Endothelial cell of umbilical vein (primary cell): ENCODE measurements at regions of chr16 and their contacts with region 1.

Region 1: DNA sequence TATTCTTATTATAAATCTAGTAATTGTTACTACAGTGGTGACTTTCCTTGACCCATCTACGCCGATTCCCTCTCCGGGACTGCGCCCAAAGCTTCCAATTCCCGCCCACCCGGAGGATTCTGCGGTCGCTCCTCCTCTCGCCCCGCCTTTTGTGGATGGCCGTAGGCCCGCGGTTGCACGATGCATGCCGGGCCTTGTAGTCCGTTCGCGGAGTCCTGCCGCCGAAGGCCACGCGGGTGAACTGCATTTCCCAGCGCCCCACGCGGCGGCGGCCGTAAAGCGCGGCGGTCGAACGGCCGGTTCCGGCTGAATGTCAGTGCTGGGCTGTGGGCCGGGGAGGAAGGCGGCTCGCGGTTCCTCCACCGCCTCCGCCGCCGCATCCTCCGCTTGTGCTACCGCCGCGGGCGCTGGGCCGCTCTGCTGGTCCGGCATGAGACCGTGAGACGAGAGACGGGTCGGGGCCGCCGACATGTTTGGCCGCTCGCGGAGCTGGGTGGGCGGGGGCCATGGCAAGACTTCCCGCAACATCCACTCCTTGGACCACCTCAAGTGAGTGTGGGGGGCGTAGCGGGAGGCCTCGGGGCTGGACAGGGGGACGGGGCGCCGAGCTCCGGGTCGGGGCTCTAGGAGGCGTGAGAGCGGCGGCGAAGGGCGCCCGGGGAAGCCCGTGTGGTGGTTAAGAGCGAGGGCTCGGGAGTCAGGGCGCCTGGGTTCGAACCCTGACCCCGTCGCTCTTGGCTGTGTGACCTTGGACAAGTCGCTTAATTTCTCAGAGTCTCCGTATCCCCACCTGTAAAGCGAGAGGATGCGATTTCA is at the start of gene CLEC16A:
- DNase-seq: peak; percentile 98
- H3K4me3 ChIP-seq: peak within 1 kb of the TSS; percentile 65 to 92 (median 80)
- H3K27ac ChIP-seq: peak within 1 kb of the TSS; percentile 57
- H3K4me1 ChIP-seq: peaks cover 36% of the 10 kb centered on the region
- H3K27me3 ChIP-seq: no peaks in the 10 kb centered on the region
- CTCF ChIP-seq: no peak
- POLR2A ChIP-seq: peak; percentile 52
- total RNA-seq, gene CLEC16A: 23.3 and 25.7 TPM in 2 replicates

Region 2: DNA sequence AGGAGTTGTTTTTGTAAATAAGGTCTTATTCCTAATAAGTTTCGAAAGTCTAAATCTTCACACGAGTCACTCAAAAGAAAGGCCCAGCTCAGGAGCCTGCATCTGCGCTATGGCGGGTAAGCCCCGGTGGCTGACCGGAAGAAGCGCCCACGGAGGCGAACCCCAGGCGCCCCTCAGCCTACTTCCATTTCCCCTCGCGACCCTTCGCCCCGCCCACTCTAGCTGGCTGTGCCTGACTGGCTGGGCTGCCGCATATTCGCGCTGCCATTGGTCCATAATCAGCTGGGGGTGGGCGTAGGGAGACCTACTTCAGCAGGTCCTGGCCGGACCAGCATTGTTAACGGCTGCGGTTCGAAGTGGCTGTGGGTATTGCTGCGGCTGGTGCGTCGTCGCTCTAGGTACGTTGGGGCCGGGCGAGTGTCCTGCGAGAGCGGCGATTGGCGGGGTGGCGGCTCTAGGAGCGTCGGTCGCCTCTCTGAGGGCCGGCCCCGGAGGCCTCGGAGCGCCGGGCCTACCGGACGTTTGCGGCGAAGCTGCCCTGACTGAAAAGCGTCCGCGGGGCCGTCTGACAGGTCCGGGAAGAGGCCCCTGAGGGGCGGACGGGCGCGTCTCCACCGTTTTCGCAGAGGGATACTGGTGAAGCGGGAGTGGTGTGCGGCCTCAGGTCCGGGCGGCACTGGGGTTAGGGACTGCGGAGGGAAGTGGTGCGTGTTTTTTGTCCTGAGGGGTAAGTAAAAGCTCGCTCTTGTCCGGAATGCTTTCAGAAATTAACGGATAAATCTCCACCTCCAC is 558.5 kb before region 1 on chr16 and contains the start of gene ATF7IP2:
- CTCF ChIA-PET with region 1: no interaction called
- POLR2A ChIA-PET with region 1: no interaction called
- dilution Hi-C with region 1: no loop called
- intact Hi-C with region 1: loop called (anchors 10 kb)
- DNase-seq: peak; percentile 95
- H3K4me3 ChIP-seq: peak within 1 kb of the TSS; percentile 72 to 94 (median 94)
- H3K27ac ChIP-seq: peak within 1 kb of the TSS; percentile 55
- H3K4me1 ChIP-seq: peaks cover 8% of the 10 kb centered on the region
- H3K27me3 ChIP-seq: no peaks in the 10 kb centered on the region
- CTCF ChIP-seq: no peak
- POLR2A ChIP-seq: peak; percentile 91
- total RNA-seq, gene ATF7IP2: 13.0 and 14.6 TPM in 2 replicates

Region 3: GRCh38 chr16:10579965-10580882 is 364.2 kb before region 1 on chr16 and contains the start of gene EMP2:
- CTCF ChIA-PET with region 1: no interaction called
- POLR2A ChIA-PET with region 1: no interaction called
- dilution Hi-C with region 1: no loop called
- intact Hi-C with region 1: loop called (anchors 1 kb)
- DNase-seq: peak; percentile 72
- H3K4me3 ChIP-seq: peak within 1 kb of the TSS; percentile 64 to 73 (median 64)
- H3K27ac ChIP-seq: peak within 1 kb of the TSS; percentile 30
- H3K4me1 ChIP-seq: peaks cover 3% of the 10 kb centered on the region
- H3K27me3 ChIP-seq: peaks cover 6 to 12% of the 10 kb centered on the region in 2 experiments
- CTCF ChIP-seq: peak; percentile 47 to 80
- POLR2A ChIP-seq: no peak
- total RNA-seq, gene EMP2: 18.3 and 25.5 TPM in 2 replicates

Region 4: GRCh38 chr16:10699756-10700155 is 244.7 kb before region 1 on chr16:
- CTCF ChIA-PET with region 1: no interaction called
- POLR2A ChIA-PET with region 1: no interaction called
- dilution Hi-C with region 1: no loop called
- intact Hi-C with region 1: no loop called
- DNase-seq: no peak
- H3K4me3 ChIP-seq: no peak overlapping the region
- H3K27ac ChIP-seq: no peak overlapping the region
- H3K4me1 ChIP-seq: no peaks in the 10 kb centered on the region
- H3K27me3 ChIP-seq: no peaks in the 10 kb centered on the region
- CTCF ChIP-seq: no peak
- POLR2A ChIP-seq: no peak

Region 5: DNA sequence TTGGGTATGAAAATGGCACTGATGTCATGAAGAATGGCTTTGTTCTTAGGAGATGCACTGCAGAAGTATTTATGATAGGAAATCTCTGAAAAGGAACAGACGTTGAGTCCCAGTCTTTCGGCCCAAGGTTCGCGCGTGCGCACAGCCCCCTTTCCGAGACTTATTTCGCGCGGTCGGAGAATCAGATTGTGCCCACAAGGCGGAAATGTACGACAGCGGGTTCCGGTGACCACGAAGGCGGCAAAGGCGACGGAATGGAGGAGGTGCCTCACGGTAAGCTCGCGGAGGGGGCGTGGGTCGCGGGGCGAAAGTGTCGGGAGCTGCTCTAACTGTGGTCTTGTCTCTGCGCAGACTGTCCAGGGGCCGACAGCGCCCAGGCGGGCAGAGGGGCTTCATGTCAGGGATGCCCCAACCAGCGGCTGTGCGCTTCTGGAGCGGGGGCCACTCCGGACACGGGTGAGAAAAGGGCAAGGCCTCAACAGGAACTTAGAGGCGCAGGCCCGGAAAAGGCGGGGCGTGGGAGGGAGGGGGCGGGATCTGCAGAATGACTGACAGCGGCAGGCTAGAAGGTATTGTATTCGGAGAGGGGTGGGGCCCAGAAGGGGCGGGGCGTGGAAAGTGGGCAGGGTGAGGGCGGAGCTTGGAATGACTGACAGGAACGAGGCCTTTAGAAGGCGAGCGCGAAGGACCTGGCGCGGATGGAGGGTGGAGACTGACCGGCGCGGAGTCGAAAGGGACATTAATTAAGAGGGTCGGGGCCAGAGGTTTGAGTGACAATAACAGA is 200.7 kb before region 1 on chr16 and contains the start of gene NUBP1:
- CTCF ChIA-PET with region 1: interaction called, 4 read pairs
- POLR2A ChIA-PET with region 1: no interaction called
- dilution Hi-C with region 1: no loop called
- intact Hi-C with region 1: loop called (anchors 1 kb)
- DNase-seq: peak; percentile 100
- H3K4me3 ChIP-seq: peak within 1 kb of the TSS; percentile 3 to 72 (median 56)
- H3K27ac ChIP-seq: peak within 1 kb of the TSS; percentile 80
- H3K4me1 ChIP-seq: peaks cover 7% of the 10 kb centered on the region
- H3K27me3 ChIP-seq: no peaks in the 10 kb centered on the region
- CTCF ChIP-seq: no peak
- POLR2A ChIP-seq: peak; percentile 86
- total RNA-seq, gene NUBP1: 23.6 and 28.7 TPM in 2 replicates

Region 6: DNA sequence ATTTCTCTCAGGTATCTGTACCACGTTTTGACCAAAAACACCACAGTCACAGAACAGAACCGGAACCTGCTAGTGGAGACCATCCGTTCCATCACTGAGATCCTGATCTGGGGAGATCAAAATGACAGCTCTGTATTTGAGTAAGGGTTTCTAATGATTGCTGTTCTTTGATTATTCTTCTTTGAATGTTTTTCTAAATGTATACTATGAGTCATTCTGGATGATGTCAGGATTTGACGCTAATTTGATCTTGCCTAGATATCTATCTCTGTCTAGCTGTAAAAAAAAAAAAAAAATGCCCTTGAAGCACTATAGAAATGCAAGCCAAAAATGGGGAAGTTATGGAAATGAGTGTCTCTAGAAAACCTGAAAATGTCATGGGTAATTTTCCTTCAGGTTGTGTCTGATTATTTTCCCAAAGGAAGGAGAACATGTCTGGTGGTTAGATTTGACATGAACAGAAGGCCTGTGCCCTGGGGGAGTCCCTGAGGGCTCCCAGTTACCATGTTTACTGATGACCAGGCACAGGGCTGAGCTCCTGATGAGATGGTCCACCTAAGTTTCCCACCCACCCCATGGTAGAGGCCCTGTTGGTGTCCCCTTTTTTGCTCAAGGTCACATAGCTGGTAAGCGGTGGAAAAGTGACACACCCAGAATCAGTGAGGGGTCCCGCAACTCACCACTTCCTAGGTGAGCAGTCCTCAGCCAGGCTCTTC is 13.5 kb after region 1 on chr16:
- CTCF ChIA-PET with region 1: interaction called, 20 read pairs
- POLR2A ChIA-PET with region 1: interaction called, 3 read pairs
- dilution Hi-C with region 1: no loop called
- intact Hi-C with region 1: loop called (anchors 1 kb)
- DNase-seq: peak; percentile 66
- H3K4me3 ChIP-seq: no peak overlapping the region
- H3K27ac ChIP-seq: peak overlapping the region; percentile 40
- H3K4me1 ChIP-seq: peaks cover 37% of the 10 kb centered on the region
- H3K27me3 ChIP-seq: no peaks in the 10 kb centered on the region
- CTCF ChIP-seq: no peak
- POLR2A ChIP-seq: no peak